Gastrocnemius medialis (tissue), 4 donors: ENCODE measurements at regions of chr4 and their contacts with region 1.

Region 1: DNA sequence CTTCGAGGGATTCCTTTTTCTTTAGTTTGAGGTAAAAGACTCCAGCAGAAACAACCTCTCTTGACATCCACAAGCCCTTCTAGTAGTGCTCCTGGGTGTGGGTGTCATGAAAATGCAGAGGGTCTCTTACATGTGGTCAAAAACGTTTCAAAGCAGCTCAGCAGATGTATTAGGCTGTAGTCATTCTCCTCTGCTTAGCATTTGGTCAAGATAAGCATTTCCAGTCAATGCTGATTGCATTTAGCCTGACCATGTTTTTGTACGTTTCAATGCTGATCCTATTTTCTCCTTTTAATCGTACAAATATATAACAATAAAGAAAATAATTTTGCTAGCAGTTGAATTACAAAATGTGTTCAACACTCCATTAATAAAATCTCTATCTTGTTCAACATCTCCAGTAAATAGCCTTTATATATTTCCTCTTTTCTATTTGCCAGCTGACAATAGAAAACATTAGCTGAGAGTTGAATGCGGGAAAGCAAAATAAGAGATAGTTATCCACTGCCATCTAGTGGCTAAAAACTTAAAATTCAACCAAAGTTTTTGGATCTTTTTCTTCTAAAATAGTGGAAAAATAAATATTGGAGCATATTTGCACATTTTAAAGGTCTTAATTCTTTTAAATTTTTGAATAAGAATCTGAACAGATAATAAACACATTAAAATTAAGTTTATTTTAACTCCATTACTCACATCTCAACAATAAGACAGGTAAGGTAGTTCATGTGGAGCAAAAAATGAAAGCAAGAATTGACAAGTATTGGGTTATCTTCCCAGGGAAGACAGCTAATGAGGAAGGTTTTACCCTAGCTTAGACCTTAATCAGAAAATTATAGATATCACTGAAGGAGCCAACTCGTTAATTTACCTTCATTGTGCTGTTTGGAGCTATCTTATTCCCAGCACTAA is 15.2 kb upstream of the PACRGL start:
- DNase-seq: no peak
- ATAC-seq: no peak
- H3K4me3 ChIP-seq: no peak overlapping the region
- H3K27ac ChIP-seq: no peak overlapping the region
- H3K4me1 ChIP-seq: no peaks in the 10 kb centered on the region
- H3K27me3 ChIP-seq: no peaks in the 10 kb centered on the region
- CTCF ChIP-seq: peak; percentile 29 to 66 (median 46)
- POLR2A ChIP-seq: no peak

Region 2: GRCh38 chr4:18689308-18690115 is 1995.6 kb before region 1 on chr4:
- in situ Hi-C with region 1: loop called (anchors 10 to 25 kb)
- intact Hi-C with region 1: loop called (anchors 2 kb)
- DNase-seq: peak; percentile 6 to 21
- ATAC-seq: peak; percentile 50 to 56
- H3K4me3 ChIP-seq: no peak overlapping the region
- H3K27ac ChIP-seq: no peak overlapping the region
- H3K4me1 ChIP-seq: no peaks in the 10 kb centered on the region
- H3K27me3 ChIP-seq: no peaks in the 10 kb centered on the region
- CTCF ChIP-seq: peak; percentile 31 to 81 (median 64)
- POLR2A ChIP-seq: no peak

Region 3: DNA sequence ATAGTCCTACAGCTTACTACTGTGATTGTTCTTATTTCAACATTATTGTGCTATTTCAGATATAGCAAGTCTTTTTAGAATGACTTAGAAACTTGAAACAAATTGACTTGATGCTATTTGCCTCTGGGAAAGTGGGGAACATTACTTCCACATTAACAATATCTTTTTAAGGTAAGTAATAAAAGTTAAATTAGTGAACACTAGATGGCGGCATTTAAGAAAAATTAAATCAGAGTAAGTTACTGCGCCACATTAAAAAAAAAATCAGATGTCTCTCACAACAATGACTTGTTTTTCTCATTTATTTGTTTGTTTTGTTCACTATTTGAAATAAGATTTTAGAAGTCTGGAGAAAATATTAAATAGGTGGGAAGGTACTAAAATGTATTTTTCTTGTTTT is 1460.3 kb before region 1 on chr4:
- in situ Hi-C with region 1: no loop called
- intact Hi-C with region 1: loop called (anchors 5 kb)
- DNase-seq: no peak
- ATAC-seq: no peak
- H3K4me3 ChIP-seq: no peak overlapping the region
- H3K27ac ChIP-seq: no peak overlapping the region
- H3K4me1 ChIP-seq: no peaks in the 10 kb centered on the region
- H3K27me3 ChIP-seq: no peaks in the 10 kb centered on the region
- CTCF ChIP-seq: peak in 1 of 5 experiments; percentile 14
- POLR2A ChIP-seq: no peak

Region 4: GRCh38 chr4:20422398-20422797 is 262.7 kb before region 1 on chr4:
- in situ Hi-C with region 1: loop called in 3 of 4 experiments (anchors 10 to 25 kb)
- intact Hi-C with region 1: loop called (anchors 2 kb)
- DNase-seq: no peak
- ATAC-seq: no peak
- H3K4me3 ChIP-seq: no peak overlapping the region
- H3K27ac ChIP-seq: no peak overlapping the region
- H3K4me1 ChIP-seq: no peaks in the 10 kb centered on the region
- H3K27me3 ChIP-seq: no peaks in the 10 kb centered on the region
- CTCF ChIP-seq: peak in 2 of 5 experiments; percentile 15 to 16
- POLR2A ChIP-seq: no peak

Region 5: DNA sequence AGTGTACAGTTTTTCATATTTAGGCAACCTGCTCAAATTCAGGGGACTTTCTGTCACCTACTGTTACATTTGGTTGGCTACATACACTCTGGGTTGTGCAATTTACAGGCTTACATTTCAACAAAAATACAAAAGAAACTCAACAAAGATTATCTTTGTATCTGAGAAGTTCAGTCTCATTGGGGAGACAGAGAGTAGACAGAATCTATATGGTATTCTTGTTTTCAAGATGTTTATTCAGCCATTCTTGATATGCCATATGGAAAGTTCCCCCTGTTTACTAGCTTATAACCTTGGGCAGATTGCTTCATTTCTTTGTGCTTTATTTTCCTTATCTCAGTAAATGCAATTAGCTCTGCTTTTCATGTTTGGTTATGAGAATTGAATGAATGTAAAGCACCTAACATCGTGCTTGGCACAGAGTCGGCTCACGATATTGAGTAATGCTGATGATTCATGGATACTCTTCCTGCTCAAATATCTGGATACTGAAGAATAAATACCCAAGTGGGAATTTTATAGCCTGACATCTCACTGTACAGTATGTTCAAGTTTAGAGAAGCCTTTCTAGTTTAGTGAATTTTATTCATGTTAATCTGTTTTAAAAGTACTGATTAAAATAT is 81.3 kb before region 1 on chr4:
- in situ Hi-C with region 1: no loop called
- intact Hi-C with region 1: no loop called
- DNase-seq: no peak
- ATAC-seq: no peak
- H3K4me3 ChIP-seq: no peak overlapping the region
- H3K27ac ChIP-seq: no peak overlapping the region
- H3K4me1 ChIP-seq: no peaks in the 10 kb centered on the region
- H3K27me3 ChIP-seq: no peaks in the 10 kb centered on the region
- CTCF ChIP-seq: no peak
- POLR2A ChIP-seq: no peak

Region 6: DNA sequence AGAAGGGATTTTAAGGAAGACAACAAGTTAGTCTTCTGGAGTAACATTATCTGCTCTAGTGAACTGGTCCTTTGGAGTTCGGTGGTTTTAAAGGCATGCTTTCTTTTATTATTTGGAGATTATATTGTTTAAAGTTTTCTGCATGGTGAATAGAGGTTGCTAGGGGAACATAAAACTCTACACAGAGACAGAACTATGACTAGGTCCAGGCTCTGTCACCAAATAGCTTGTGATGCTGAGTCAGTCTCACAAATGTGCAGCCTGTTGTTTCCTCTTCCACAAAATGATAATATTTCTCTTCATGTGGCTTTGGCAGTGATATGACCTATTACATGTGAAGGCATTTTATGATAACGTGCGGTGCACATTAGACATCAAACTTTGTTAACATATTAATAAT is 147.7 kb after region 1 on chr4:
- in situ Hi-C with region 1: no loop called
- intact Hi-C with region 1: no loop called
- DNase-seq: no peak
- ATAC-seq: no peak
- H3K4me3 ChIP-seq: no peak overlapping the region
- H3K27ac ChIP-seq: no peak overlapping the region
- H3K4me1 ChIP-seq: no peaks in the 10 kb centered on the region
- H3K27me3 ChIP-seq: no peaks in the 10 kb centered on the region
- CTCF ChIP-seq: no peak
- POLR2A ChIP-seq: no peak

Region 7: GRCh38 chr4:21184788-21185187 is 499.7 kb after region 1 on chr4:
- in situ Hi-C with region 1: no loop called
- intact Hi-C with region 1: no loop called
- DNase-seq: no peak
- ATAC-seq: no peak
- H3K4me3 ChIP-seq: no peak overlapping the region
- H3K27ac ChIP-seq: no peak overlapping the region
- H3K4me1 ChIP-seq: no peaks in the 10 kb centered on the region
- H3K27me3 ChIP-seq: no peaks in the 10 kb centered on the region
- CTCF ChIP-seq: no peak
- POLR2A ChIP-seq: no peak